ENCODE measurements at regions of chr7 and their contacts with region 1.

Region 1: DNA sequence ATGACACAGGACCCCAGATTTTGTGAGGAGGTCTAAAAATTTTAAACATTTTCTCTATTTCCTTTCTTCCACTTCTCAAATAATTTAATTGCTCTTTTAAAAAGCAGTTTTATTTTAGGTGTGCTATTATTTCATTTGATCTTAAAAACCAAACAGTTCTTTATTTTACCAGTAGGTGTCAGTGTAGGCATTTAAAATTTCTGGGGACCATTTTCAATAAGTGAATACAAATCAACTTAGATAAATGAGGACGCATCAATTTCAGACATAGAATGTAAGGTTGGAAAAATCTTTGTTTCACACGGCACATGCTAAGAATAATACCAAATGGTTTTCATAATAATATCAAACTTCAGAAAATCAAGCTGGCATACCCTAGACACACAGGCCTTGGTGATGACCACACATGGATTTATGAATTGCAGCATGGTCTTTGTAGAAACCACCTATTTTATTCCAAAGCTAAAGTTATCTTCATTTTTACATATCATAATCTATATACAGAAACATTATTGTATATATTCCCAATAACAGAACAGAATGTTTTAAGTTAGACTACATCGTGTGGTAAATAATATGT is 127.6 kb upstream of the SLC26A5 start:
- DNase-seq: peak; percentile 10 to 29
- ATAC-seq: 0 out of 6 replicates have a peak, but pooled peaks of 1 of the 2 experiments have one; percentile 36
- H3K4me3 ChIP-seq: no peak overlapping the region
- H3K27ac ChIP-seq: no peak overlapping the region
- H3K4me1 ChIP-seq: no peaks in the 10 kb centered on the region
- CTCF ChIP-seq: peak; percentile 82
- EP300 ChIP-seq: no peak
- POLR2A ChIP-seq: no peak
- RAD21 ChIP-seq: peak; percentile 69 to 83

Region 2: GRCh38 chr7:103541026-103541425 is 32.5 kb before region 1 on chr7:
- CTCF ChIA-PET with region 1: no interaction called
- POLR2A ChIA-PET with region 1: no interaction called
- DNase-seq: no peak
- ATAC-seq: peak in 1 of 2 experiments; percentile 39; a peak in 1 of 6 replicates
- H3K4me3 ChIP-seq: no peak overlapping the region
- H3K27ac ChIP-seq: no peak overlapping the region
- H3K4me1 ChIP-seq: no peaks in the 10 kb centered on the region
- CTCF ChIP-seq: no peak
- EP300 ChIP-seq: no peak
- POLR2A ChIP-seq: no peak
- RAD21 ChIP-seq: no peak

Region 3: DNA sequence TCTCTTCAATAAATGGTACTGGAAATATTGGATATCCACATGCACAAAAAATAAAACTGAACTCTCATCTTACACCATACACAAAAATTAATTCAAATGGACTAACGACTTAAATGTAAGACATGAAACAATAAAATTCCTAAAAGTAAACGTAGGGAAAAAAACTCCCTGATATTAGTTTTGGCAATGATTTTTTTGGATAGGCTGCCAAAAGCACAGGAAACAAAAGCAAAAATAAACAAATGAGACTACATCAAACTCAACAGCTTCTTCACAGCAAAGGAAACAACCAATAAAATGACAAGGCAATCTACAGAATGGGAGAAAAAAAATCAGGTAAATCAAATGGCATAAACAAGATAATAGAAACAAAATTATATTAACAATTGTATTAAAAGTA is 568.6 kb after region 1 on chr7:
- CTCF ChIA-PET with region 1: interaction called, 14 read pairs
- POLR2A ChIA-PET with region 1: no interaction called
- DNase-seq: no peak
- ATAC-seq: no peak
- H3K4me3 ChIP-seq: no peak overlapping the region
- H3K27ac ChIP-seq: no peak overlapping the region
- H3K4me1 ChIP-seq: no peaks in the 10 kb centered on the region
- CTCF ChIP-seq: no peak
- EP300 ChIP-seq: no peak
- POLR2A ChIP-seq: no peak
- RAD21 ChIP-seq: no peak

Region 4: GRCh38 chr7:104160375-104160774 is 586.8 kb after region 1 on chr7:
- CTCF ChIA-PET with region 1: interaction called, 12 read pairs
- POLR2A ChIA-PET with region 1: no interaction called
- DNase-seq: peak in 1 of 2 experiments; percentile 10
- ATAC-seq: no peak
- H3K4me3 ChIP-seq: no peak overlapping the region
- H3K27ac ChIP-seq: no peak overlapping the region
- H3K4me1 ChIP-seq: no peaks in the 10 kb centered on the region
- CTCF ChIP-seq: no peak; the same call in 1 of the 3 replicates
- EP300 ChIP-seq: no peak
- POLR2A ChIP-seq: no peak
- RAD21 ChIP-seq: peak; percentile 37 to 61